ENCODE measurements at regions of chr3 and their contacts with region 1.

Region 1: DNA sequence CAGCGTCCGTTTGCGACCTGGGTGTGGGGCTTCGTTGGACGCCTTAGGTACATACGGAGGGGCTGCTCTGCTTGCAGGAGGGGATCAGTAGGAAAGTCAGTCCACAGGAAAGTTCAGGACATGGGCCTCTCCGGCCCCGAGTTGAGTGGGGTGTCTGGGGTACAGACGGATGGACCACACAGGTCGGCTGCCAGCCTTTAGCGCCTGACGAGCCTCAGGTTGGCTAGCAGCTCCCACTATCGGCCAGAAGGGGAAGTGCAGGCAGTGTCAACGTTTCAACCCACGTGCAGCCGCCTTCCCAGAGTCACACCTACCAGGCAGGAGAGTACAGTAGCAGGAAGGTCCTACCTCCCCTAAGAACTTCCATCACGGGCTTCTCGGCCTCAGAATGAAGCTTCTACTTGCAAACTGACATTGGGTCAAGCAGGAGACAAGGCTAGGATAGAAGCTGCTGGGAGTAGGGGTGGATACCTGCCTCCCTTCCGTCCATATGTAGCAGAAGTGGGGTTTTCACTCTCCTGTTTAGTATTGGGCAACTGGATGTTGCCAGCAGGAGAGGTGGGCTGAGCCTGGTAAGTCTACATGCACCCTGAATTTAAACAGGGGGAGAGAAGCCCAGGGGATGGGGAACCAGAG is 1.8 kb upstream of the SCN5A start:
- DNase-seq: peak; percentile 80
- ATAC-seq: peak; percentile 73
- H3K4me3 Mint-ChIP-seq: no peak overlapping the region
- H3K27ac Mint-ChIP-seq: no peak overlapping the region
- H3K4me1 Mint-ChIP-seq: peaks cover 8% of the 10 kb centered on the region
- H3K27me3 Mint-ChIP-seq: peaks cover 19% of the 10 kb centered on the region
- CTCF ChIP-seq: peak; percentile 97

Region 2: DNA sequence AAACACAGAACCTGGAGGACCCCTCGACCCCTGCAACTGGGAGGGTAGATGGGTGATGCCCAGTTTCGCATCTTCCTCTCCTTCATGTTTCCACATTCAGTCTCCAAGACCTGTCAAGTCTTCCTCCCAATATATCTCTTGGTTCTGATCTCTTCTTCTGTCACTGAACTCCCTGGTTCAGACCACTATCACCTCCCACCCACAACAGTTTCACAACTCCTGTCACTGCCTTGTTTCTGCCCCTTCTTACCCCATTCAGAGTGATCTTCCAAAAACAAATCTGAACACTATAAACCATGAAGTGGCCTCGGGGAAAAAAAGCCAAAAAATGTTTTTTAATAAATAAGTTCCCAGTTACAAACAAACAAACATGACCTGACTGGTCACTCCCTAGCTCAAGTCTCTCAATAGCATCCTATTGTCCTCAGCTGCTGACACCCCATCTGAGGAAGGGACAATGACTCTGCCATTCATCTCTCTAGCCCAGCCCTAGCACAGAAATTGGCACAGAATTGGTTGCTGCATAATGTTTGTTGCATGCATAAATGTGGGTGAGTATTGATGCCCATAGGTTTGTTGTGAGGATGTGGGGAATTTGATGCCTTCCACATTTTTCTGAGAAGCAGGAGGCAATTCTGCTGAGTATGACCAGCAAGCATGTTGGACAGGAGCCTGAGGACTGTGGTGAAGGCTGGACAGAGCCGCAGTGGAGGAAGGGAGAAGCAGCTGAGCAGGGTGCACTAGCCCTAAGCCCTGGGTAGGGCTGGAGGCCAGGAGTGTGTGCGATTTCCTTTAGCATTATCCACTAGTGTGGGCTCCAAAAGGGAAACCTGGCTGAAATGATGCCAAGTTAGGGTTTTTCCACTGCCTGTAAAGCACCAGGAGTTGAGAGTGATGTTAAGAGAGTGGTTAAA is 316.9 kb before region 1 on chr3:
- CTCF ChIA-PET with region 1: no interaction called
- POLR2A ChIA-PET with region 1: no interaction called
- intact Hi-C with region 1: no loop called
- DNase-seq: no peak
- ATAC-seq: peak; percentile 49
- H3K4me3 Mint-ChIP-seq: no peak overlapping the region
- H3K27ac Mint-ChIP-seq: no peak overlapping the region
- H3K4me1 Mint-ChIP-seq: peaks cover 5% of the 10 kb centered on the region
- H3K27me3 Mint-ChIP-seq: peaks cover 3% of the 10 kb centered on the region
- CTCF ChIP-seq: no peak

Region 3: GRCh38 chr3:38397320-38397719 is 254.0 kb before region 1 on chr3:
- CTCF ChIA-PET with region 1: no interaction called
- POLR2A ChIA-PET with region 1: no interaction called
- intact Hi-C with region 1: no loop called
- DNase-seq: peak; percentile 8
- ATAC-seq: no peak
- H3K4me3 Mint-ChIP-seq: no peak overlapping the region
- H3K27ac Mint-ChIP-seq: no peak overlapping the region
- H3K4me1 Mint-ChIP-seq: no peaks in the 10 kb centered on the region
- H3K27me3 Mint-ChIP-seq: no peaks in the 10 kb centered on the region
- CTCF ChIP-seq: no peak

Region 4: GRCh38 chr3:38496131-38496910 is 155.0 kb before region 1 on chr3 and contains the start of gene EXOG:
- CTCF ChIA-PET with region 1: interaction called, 19 read pairs
- POLR2A ChIA-PET with region 1: interaction called, 3 read pairs
- intact Hi-C with region 1: loop called (anchors 10 kb)
- DNase-seq: peak; percentile 93
- ATAC-seq: peak; percentile 95
- H3K4me3 Mint-ChIP-seq: peak within 1 kb of the TSS; percentile 99
- H3K27ac Mint-ChIP-seq: peak within 1 kb of the TSS; percentile 95
- H3K4me1 Mint-ChIP-seq: peaks cover 18% of the 10 kb centered on the region
- H3K27me3 Mint-ChIP-seq: no peaks in the 10 kb centered on the region
- CTCF ChIP-seq: peak; percentile 84
- total RNA-seq, gene EXOG: 16.8 to 17.7 TPM

Region 5: GRCh38 chr3:38627956-38628355 is 23.3 kb before region 1 on chr3:
- CTCF ChIA-PET with region 1: interaction called, 13 read pairs
- POLR2A ChIA-PET with region 1: no interaction called
- intact Hi-C with region 1: no loop called
- DNase-seq: peak; percentile 51
- ATAC-seq: peak; percentile 82
- H3K4me3 Mint-ChIP-seq: no peak overlapping the region
- H3K27ac Mint-ChIP-seq: no peak overlapping the region
- H3K4me1 Mint-ChIP-seq: no peaks in the 10 kb centered on the region
- H3K27me3 Mint-ChIP-seq: no peaks in the 10 kb centered on the region
- CTCF ChIP-seq: peak; percentile 25

Region 6: DNA sequence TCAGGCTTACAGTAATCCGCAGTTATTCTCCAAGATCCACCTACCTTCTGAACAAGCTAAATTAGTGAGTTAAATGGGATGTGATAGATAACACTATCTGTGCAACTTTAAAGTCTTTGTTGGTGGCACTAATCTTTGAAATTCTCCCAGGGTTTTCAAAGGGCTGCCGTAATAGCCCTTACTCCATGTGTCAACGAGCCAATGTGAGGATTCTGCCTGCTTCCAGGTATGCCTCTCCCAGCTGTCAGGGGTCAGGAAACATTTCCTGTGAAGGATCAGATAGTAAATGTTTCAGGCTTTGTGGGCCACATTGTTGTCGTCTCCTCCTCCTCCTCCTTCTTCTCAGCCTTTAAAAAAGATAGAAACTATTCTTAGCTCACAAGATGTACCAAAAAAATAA is 18.4 kb after region 1 on chr3:
- CTCF ChIA-PET with region 1: interaction called, 21 read pairs
- POLR2A ChIA-PET with region 1: no interaction called
- intact Hi-C with region 1: no loop called
- DNase-seq: no peak
- ATAC-seq: no peak
- H3K4me3 Mint-ChIP-seq: no peak overlapping the region
- H3K27ac Mint-ChIP-seq: no peak overlapping the region
- H3K4me1 Mint-ChIP-seq: no peaks in the 10 kb centered on the region
- H3K27me3 Mint-ChIP-seq: peaks cover 24% of the 10 kb centered on the region
- CTCF ChIP-seq: no peak

Region 7: DNA sequence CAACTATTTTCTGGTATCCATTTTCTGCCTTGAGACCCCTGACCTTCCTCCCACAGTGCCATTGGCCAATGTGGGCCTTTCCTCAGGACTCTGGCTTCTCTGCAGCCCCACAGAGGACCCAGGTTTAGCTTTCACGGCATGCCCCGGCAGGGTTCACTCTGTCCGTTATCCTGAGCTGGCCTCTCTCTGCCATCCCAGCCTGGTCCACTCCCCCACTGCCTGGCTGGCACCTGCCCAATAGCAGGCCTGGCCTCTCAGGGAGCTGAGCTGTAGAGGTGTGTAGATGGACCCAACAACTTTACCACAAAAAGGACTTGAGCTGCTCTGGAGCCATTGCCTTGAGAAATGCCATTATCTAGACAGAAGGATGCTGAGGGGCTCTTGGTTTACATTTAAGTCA is 107.3 kb after region 1 on chr3:
- CTCF ChIA-PET with region 1: no interaction called
- POLR2A ChIA-PET with region 1: no interaction called
- intact Hi-C with region 1: no loop called
- DNase-seq: no peak
- ATAC-seq: no peak
- H3K4me3 Mint-ChIP-seq: no peak overlapping the region
- H3K27ac Mint-ChIP-seq: no peak overlapping the region
- H3K4me1 Mint-ChIP-seq: no peaks in the 10 kb centered on the region
- H3K27me3 Mint-ChIP-seq: peaks cover 3% of the 10 kb centered on the region
- CTCF ChIP-seq: no peak

Region 8: GRCh38 chr3:38992117-38992760 is 341.0 kb after region 1 on chr3:
- CTCF ChIA-PET with region 1: no interaction called
- POLR2A ChIA-PET with region 1: no interaction called
- intact Hi-C with region 1: loop called (anchors 10 kb)
- DNase-seq: no peak
- ATAC-seq: no peak
- H3K4me3 Mint-ChIP-seq: no peak overlapping the region
- H3K27ac Mint-ChIP-seq: no peak overlapping the region
- H3K4me1 Mint-ChIP-seq: no peaks in the 10 kb centered on the region
- H3K27me3 Mint-ChIP-seq: peaks cover 6% of the 10 kb centered on the region
- CTCF ChIP-seq: no peak